CD8-positive, alpha-beta T cell (primary cell): ENCODE measurements at regions of chr2 and their contacts with region 1.

Region 1: GRCh38 chr2:215920244-215921100 is 92.9 kb downstream of the MREG start:
- DNase-seq: peak; percentile 20 to 75 (median 50)
- ATAC-seq: peak; percentile 58
- H3K4me3 ChIP-seq: no peak overlapping the region
- H3K4me3 Mint-ChIP-seq: no peak overlapping the region
- H3K27ac ChIP-seq: no peak overlapping the region
- H3K27ac Mint-ChIP-seq: no peak overlapping the region
- H3K4me1 ChIP-seq: no peaks in the 10 kb centered on the region
- H3K4me1 Mint-ChIP-seq: peaks cover 2% of the 10 kb centered on the region
- H3K27me3 ChIP-seq: no peaks in the 10 kb centered on the region
- H3K27me3 Mint-ChIP-seq: peaks cover 2% of the 10 kb centered on the region
- CTCF ChIP-seq: peak; percentile 70

Region 2: GRCh38 chr2:213934560-213934959 is 1985.9 kb before region 1 on chr2:
- CTCF ChIA-PET with region 1: no interaction called
- POLR2A ChIA-PET with region 1: no interaction called
- intact Hi-C with region 1: loop called in 1 of 2 experiments (anchors 10 kb)
- DNase-seq: peak in 3 of 9 experiments; percentile 9 to 41 (median 27)
- ATAC-seq: no peak
- H3K4me3 ChIP-seq: no peak overlapping the region
- H3K4me3 Mint-ChIP-seq: no peak overlapping the region
- H3K27ac ChIP-seq: no peak overlapping the region
- H3K27ac Mint-ChIP-seq: no peak overlapping the region
- H3K4me1 ChIP-seq: no peaks in the 10 kb centered on the region
- H3K4me1 Mint-ChIP-seq: no peaks in the 10 kb centered on the region
- H3K27me3 ChIP-seq: no peaks in the 10 kb centered on the region
- H3K27me3 Mint-ChIP-seq: no peaks in the 10 kb centered on the region
- CTCF ChIP-seq: peak; percentile 56

Region 3: GRCh38 chr2:215269397-215270119 is 650.9 kb before region 1 on chr2:
- CTCF ChIA-PET with region 1: no interaction called
- POLR2A ChIA-PET with region 1: no interaction called
- intact Hi-C with region 1: loop called in 1 of 2 experiments (anchors 5 kb)
- DNase-seq: peak; percentile 5 to 78 (median 58)
- ATAC-seq: peak; percentile 38
- H3K4me3 ChIP-seq: no peak overlapping the region
- H3K4me3 Mint-ChIP-seq: no peak overlapping the region
- H3K27ac ChIP-seq: no peak overlapping the region
- H3K27ac Mint-ChIP-seq: no peak overlapping the region
- H3K4me1 ChIP-seq: no peaks in the 10 kb centered on the region
- H3K4me1 Mint-ChIP-seq: no peaks in the 10 kb centered on the region
- H3K27me3 ChIP-seq: no peaks in the 10 kb centered on the region
- H3K27me3 Mint-ChIP-seq: no peaks in the 10 kb centered on the region
- CTCF ChIP-seq: peak; percentile 91

Region 4: DNA sequence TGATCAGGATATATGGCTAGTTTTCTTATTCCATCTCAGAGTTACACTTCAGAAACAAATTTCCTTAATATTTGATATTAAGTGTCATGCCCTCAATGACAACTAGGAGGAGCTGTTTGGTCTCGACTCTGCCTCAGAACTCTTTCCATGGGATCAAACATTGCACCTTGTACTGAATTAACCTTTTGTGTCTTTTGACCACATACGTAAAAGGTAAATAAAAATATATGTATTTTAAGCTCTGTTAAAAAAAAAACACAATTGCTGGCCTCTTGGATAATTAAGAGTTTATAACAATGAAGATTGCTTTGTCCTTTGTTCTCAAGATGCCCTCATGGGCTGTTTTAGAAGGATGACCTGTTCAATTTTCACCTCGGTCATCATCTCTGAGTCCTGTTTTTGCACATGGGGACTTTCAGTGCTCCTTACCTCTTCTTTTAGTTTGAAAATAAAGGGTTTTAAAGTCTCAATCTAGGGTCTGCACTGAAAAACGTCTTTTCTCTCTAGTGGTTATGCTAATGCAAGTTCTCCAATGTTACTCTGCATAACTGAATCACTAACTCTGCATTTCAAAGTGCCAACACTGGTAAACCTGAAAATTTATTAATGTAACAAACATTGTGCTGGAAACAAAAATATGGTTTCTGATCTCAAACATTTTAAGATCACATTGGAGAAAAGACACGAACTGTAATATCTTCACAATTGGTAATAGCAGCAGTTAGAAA is 465.8 kb before region 1 on chr2:
- CTCF ChIA-PET with region 1: interaction called, 6 read pairs
- POLR2A ChIA-PET with region 1: no interaction called
- intact Hi-C with region 1: loop called (anchors 1 kb)
- DNase-seq: peak in 2 of 9 experiments; percentile 34 to 48
- ATAC-seq: no peak
- H3K4me3 ChIP-seq: no peak overlapping the region
- H3K4me3 Mint-ChIP-seq: no peak overlapping the region
- H3K27ac ChIP-seq: no peak overlapping the region
- H3K27ac Mint-ChIP-seq: no peak overlapping the region
- H3K4me1 ChIP-seq: no peaks in the 10 kb centered on the region
- H3K4me1 Mint-ChIP-seq: no peaks in the 10 kb centered on the region
- H3K27me3 ChIP-seq: no peaks in the 10 kb centered on the region
- H3K27me3 Mint-ChIP-seq: peaks cover 19% of the 10 kb centered on the region
- CTCF ChIP-seq: peak; percentile 92

Region 5: GRCh38 chr2:215906458-215906857 is 14.0 kb before region 1 on chr2:
- CTCF ChIA-PET with region 1: interaction called, 13 read pairs
- POLR2A ChIA-PET with region 1: no interaction called
- intact Hi-C with region 1: no loop called
- DNase-seq: no peak
- ATAC-seq: no peak
- H3K4me3 ChIP-seq: no peak overlapping the region
- H3K4me3 Mint-ChIP-seq: no peak overlapping the region
- H3K27ac ChIP-seq: no peak overlapping the region
- H3K27ac Mint-ChIP-seq: no peak overlapping the region
- H3K4me1 ChIP-seq: no peaks in the 10 kb centered on the region
- H3K4me1 Mint-ChIP-seq: no peaks in the 10 kb centered on the region
- H3K27me3 ChIP-seq: no peaks in the 10 kb centered on the region
- H3K27me3 Mint-ChIP-seq: peaks cover 2% of the 10 kb centered on the region
- CTCF ChIP-seq: no peak